ENCODE measurements at regions of chr7 and their contacts with region 1.

Region 1: DNA sequence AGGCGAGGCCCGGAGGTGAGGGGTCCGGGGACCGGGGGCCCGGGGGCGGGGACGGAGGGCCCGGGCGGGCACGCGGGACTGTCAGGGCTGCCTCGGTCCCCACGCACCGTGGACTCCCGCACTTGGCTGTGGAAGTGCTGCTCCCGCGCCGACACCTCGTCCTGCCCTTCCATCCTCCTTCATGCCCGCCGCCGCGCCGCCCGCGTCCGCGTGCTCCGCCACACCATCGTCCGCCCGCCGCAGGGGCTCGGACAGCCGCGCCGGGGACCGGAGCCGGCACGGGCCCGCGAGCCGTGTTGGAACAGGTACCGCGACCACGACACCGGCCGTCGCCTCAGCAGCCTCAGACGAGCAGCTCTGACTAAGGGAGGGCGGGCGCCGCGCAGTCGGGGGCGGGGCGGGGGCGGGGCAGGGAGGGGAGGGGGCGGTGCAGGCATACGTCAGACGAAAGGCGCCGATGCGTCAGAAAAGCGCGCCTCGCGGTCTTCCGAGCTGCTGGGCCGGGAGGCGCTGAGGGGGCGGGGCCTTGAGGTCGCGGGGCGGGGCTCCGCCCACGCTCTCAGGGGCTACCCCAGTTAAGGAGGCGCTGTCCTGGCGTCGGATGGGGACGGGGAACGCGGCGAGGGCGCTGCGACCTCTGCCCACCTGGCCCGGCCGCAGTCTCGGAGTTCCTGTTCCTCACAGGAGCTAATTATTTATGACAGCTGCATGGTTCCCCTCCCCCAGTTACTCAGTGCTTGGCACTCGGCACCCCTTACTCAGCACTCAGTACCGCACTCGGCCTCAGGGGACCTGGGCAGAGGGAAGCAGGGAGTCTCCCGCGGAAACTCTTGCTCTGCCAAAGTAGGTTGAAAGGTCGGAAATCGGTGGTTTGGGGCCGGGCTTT is at the start of gene LMBR1:
- DNase-seq: peak; percentile 97
- ATAC-seq: peak; percentile 82
- H3K4me3 ChIP-seq: peak within 1 kb of the TSS; percentile 71 to 87 (median 81)
- H3K4me3 Mint-ChIP-seq: peak within 1 kb of the TSS; percentile 93
- H3K27ac ChIP-seq: peak within 1 kb of the TSS; percentile 74 to 86
- H3K27ac Mint-ChIP-seq: peak within 1 kb of the TSS; percentile 94
- H3K4me1 ChIP-seq: peaks cover 5 to 20% of the 10 kb centered on the region in 2 donors
- H3K4me1 Mint-ChIP-seq: peaks cover 36% of the 10 kb centered on the region
- H3K27me3 ChIP-seq: no peaks in the 10 kb centered on the region
- H3K27me3 Mint-ChIP-seq: no peaks in the 10 kb centered on the region
- CTCF ChIP-seq: peak; percentile 43
- total RNA-seq, gene LMBR1: 85.2 and 99.7 TPM in 2 replicates

Region 2: DNA sequence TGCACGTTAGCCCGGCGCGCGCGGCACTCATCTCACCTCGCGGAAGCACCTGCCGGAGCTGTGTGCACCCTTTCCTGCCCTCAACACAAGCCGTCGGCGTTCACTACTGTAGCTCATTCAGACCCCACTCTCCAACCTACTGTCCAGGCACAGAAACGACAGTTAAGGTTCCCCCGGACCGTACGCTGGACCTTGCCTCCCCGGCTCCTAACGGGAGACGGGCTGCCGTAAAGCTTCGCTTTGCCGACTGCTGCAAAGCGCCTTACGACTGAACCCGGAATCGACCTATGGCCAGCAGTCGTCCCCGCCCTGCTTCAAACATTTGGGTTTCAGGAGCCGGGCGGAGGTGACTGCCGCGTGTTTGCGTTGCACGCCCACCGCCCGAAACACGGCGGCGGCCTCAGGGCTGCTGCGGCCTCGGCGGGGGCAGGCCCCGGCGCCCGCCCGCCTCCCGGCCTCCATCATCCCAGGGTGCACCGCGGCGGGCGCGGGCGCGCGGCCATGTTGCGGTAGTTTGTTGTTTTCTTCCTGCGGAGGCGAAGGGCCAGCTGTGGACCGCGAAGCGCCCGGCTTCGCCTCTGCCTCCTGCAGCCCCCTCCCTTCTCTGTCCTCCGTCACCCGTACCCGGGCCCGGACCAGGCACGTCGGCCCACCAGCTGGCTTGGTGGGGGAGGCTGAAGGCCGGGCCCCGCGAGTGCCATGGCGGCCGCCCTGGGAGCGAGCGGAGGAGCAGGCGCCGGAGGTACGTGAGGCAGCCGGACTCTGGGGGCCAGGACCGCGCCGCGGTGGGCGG is 1248.7 kb before region 1 on chr7 and contains the start of gene RBM33:
- CTCF ChIA-PET with region 1: no interaction called
- POLR2A ChIA-PET with region 1: no interaction called
- intact Hi-C with region 1: loop called (anchors 5 kb)
- DNase-seq: peak; percentile 93
- ATAC-seq: peak; percentile 74
- H3K4me3 ChIP-seq: peak within 1 kb of the TSS; percentile 70 to 96 (median 90)
- H3K4me3 Mint-ChIP-seq: peak within 1 kb of the TSS; percentile 92
- H3K27ac ChIP-seq: peak within 1 kb of the TSS; percentile 88 to 92
- H3K27ac Mint-ChIP-seq: peak within 1 kb of the TSS; percentile 96
- H3K4me1 ChIP-seq: peaks cover 20 to 25% of the 10 kb centered on the region in 2 donors
- H3K4me1 Mint-ChIP-seq: peaks cover 45% of the 10 kb centered on the region
- H3K27me3 ChIP-seq: no peaks in the 10 kb centered on the region
- H3K27me3 Mint-ChIP-seq: no peaks in the 10 kb centered on the region
- CTCF ChIP-seq: no peak
- total RNA-seq, gene RBM33: 185 and 189 TPM in 2 replicates

Region 3: GRCh38 chr7:156640257-156640948 is 252.7 kb before region 1 on chr7 and contains the start of gene RNF32:
- CTCF ChIA-PET with region 1: interaction called, 5 read pairs
- POLR2A ChIA-PET with region 1: interaction called, 4 read pairs
- intact Hi-C with region 1: loop called (anchors 5 kb)
- DNase-seq: peak; percentile 98
- ATAC-seq: peak; percentile 82
- H3K4me3 ChIP-seq: peak within 1 kb of the TSS in 4 of 5 experiments; percentile 64 to 96 (median 85)
- H3K4me3 Mint-ChIP-seq: peak within 1 kb of the TSS; percentile 96
- H3K27ac ChIP-seq: peak within 1 kb of the TSS; percentile 80 to 98
- H3K27ac Mint-ChIP-seq: peak within 1 kb of the TSS; percentile 97
- H3K4me1 ChIP-seq: peaks cover 11 to 26% of the 10 kb centered on the region in 2 donors
- H3K4me1 Mint-ChIP-seq: peaks cover 36% of the 10 kb centered on the region
- H3K27me3 ChIP-seq: peaks cover 0 to 4% (median 0%) of the 10 kb centered on the region in 4 experiments
- H3K27me3 Mint-ChIP-seq: no peaks in the 10 kb centered on the region
- CTCF ChIP-seq: no peak
- total RNA-seq, gene RNF32: 2.3 and 3.4 TPM in 2 replicates

Region 4: DNA sequence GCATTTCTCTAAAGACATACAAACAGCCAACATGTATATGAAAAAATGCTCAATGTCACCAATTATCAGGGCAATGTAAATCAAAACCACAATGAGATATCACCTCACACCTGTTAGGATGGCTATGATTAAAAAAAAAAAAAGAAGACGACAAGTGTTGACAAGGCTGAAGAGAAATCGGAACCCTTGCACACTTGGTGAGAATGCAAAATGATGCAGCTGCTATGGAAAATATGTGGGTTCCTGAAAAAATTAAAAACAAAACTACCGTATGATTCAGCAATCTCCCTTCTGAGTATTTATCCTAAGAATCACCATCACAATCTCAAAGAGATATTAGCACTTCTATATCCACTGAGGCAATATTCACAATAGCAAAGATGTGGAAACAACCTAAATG is 11.4 kb before region 1 on chr7:
- CTCF ChIA-PET with region 1: no interaction called
- POLR2A ChIA-PET with region 1: no interaction called
- intact Hi-C with region 1: no loop called
- DNase-seq: no peak
- ATAC-seq: no peak
- H3K4me3 ChIP-seq: no peak overlapping the region
- H3K4me3 Mint-ChIP-seq: no peak overlapping the region
- H3K27ac ChIP-seq: no peak overlapping the region
- H3K27ac Mint-ChIP-seq: no peak overlapping the region
- H3K4me1 ChIP-seq: peaks cover 0 to 7% of the 10 kb centered on the region in 2 donors
- H3K4me1 Mint-ChIP-seq: peaks cover 48% of the 10 kb centered on the region
- H3K27me3 ChIP-seq: no peaks in the 10 kb centered on the region
- H3K27me3 Mint-ChIP-seq: no peaks in the 10 kb centered on the region
- CTCF ChIP-seq: no peak

Region 5: GRCh38 chr7:156949541-156950380 is 56.7 kb after region 1 on chr7 and contains the start of gene NOM1:
- CTCF ChIA-PET with region 1: interaction called, 6 read pairs
- POLR2A ChIA-PET with region 1: no interaction called
- intact Hi-C with region 1: loop called (anchors 1 kb)
- DNase-seq: peak; percentile 93
- ATAC-seq: peak; percentile 95
- H3K4me3 ChIP-seq: peak within 1 kb of the TSS; percentile 49 to 93 (median 73)
- H3K4me3 Mint-ChIP-seq: peak within 1 kb of the TSS; percentile 96
- H3K27ac ChIP-seq: peak within 1 kb of the TSS in 1 of 2 donors; percentile 65
- H3K27ac Mint-ChIP-seq: peak within 1 kb of the TSS; percentile 68
- H3K4me1 ChIP-seq: peaks cover 16 to 31% of the 10 kb centered on the region in 2 donors
- H3K4me1 Mint-ChIP-seq: peaks cover 20% of the 10 kb centered on the region
- H3K27me3 ChIP-seq: peaks cover 0 to 1% (median 0%) of the 10 kb centered on the region in 4 experiments
- H3K27me3 Mint-ChIP-seq: peaks cover 4% of the 10 kb centered on the region
- CTCF ChIP-seq: peak; percentile 74
- total RNA-seq, gene NOM1: 38.3 and 41.0 TPM in 2 replicates

Region 6: DNA sequence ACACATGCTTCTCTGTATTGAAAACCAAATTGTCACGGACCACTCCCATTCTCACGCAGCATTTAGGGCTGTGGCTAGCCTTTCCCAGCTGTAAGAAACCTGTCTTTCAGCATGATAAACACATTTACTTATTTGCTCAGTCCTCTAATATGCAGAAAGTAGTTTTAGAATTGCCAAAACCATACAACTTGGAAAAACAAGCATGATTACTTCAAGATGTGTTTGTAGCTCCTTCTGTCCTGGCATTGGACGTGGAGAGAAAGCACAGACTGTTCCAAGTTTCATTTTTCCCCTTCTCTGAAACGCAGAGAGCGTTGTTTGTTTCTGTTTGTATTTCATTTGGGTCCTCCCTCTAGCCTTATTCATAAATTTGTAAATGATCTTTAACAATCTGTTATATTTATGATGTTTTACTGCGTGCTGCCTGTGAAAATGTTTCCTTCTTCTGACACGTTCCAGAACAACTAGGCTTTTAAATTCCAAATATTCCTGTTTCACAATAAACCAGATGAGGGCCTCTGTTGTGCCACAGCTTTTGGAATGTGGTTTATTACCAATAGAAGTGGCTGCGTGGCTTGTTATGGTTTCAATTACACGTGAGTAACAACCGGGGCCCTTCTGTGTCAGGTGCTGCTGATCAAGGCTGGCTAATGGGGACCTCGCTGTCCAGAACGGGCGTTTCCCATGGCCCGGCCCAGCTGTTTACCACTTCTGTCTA is 91.3 kb after region 1 on chr7:
- CTCF ChIA-PET with region 1: no interaction called
- POLR2A ChIA-PET with region 1: no interaction called
- intact Hi-C with region 1: no loop called
- DNase-seq: no peak
- ATAC-seq: no peak
- H3K4me3 ChIP-seq: no peak overlapping the region
- H3K4me3 Mint-ChIP-seq: no peak overlapping the region
- H3K27ac ChIP-seq: no peak overlapping the region
- H3K27ac Mint-ChIP-seq: no peak overlapping the region
- H3K4me1 ChIP-seq: no peaks in the 10 kb centered on the region
- H3K4me1 Mint-ChIP-seq: no peaks in the 10 kb centered on the region
- H3K27me3 ChIP-seq: no peaks in the 10 kb centered on the region
- H3K27me3 Mint-ChIP-seq: no peaks in the 10 kb centered on the region
- CTCF ChIP-seq: no peak

Region 7: GRCh38 chr7:158704704-158705468 is 1811.8 kb after region 1 on chr7 and contains the start of gene NCAPG2:
- CTCF ChIA-PET with region 1: no interaction called
- POLR2A ChIA-PET with region 1: no interaction called
- intact Hi-C with region 1: loop called (anchors 10 kb)
- DNase-seq: peak; percentile 98
- ATAC-seq: peak; percentile 97
- H3K4me3 ChIP-seq: peak within 1 kb of the TSS; percentile 24 to 88 (median 81)
- H3K4me3 Mint-ChIP-seq: peak within 1 kb of the TSS; percentile 92
- H3K27ac ChIP-seq: peak within 1 kb of the TSS; percentile 36 to 85
- H3K27ac Mint-ChIP-seq: peak within 1 kb of the TSS; percentile 94
- H3K4me1 ChIP-seq: peaks cover 6 to 12% of the 10 kb centered on the region in 2 donors
- H3K4me1 Mint-ChIP-seq: peaks cover 16% of the 10 kb centered on the region
- H3K27me3 ChIP-seq: no peaks in the 10 kb centered on the region
- H3K27me3 Mint-ChIP-seq: no peaks in the 10 kb centered on the region
- CTCF ChIP-seq: peak; percentile 28
- total RNA-seq, gene NCAPG2: 9.8 and 11.4 TPM in 2 replicates